ENCODE measurements at regions of chr10 and their contacts with region 1.

Region 1: GRCh38 chr10:92014620-92015019 is 91.0 kb downstream of the BTAF1 start:
- H3K4me3 Mint-ChIP-seq: no peak overlapping the region
- H3K27ac Mint-ChIP-seq: no peak overlapping the region
- H3K4me1 Mint-ChIP-seq: no peaks in the 10 kb centered on the region
- H3K27me3 Mint-ChIP-seq: no peaks in the 10 kb centered on the region

Region 2: GRCh38 chr10:91983416-91983815 is 31.2 kb before region 1 on chr10:
- intact Hi-C with region 1: loop called (anchors 5 kb)
- H3K4me3 Mint-ChIP-seq: no peak overlapping the region
- H3K27ac Mint-ChIP-seq: no peak overlapping the region
- H3K4me1 Mint-ChIP-seq: peaks cover 6% of the 10 kb centered on the region
- H3K27me3 Mint-ChIP-seq: no peaks in the 10 kb centered on the region